GM13976 (cell line): ENCODE measurements at regions of chr10 and their contacts with region 1.

Region 1: DNA sequence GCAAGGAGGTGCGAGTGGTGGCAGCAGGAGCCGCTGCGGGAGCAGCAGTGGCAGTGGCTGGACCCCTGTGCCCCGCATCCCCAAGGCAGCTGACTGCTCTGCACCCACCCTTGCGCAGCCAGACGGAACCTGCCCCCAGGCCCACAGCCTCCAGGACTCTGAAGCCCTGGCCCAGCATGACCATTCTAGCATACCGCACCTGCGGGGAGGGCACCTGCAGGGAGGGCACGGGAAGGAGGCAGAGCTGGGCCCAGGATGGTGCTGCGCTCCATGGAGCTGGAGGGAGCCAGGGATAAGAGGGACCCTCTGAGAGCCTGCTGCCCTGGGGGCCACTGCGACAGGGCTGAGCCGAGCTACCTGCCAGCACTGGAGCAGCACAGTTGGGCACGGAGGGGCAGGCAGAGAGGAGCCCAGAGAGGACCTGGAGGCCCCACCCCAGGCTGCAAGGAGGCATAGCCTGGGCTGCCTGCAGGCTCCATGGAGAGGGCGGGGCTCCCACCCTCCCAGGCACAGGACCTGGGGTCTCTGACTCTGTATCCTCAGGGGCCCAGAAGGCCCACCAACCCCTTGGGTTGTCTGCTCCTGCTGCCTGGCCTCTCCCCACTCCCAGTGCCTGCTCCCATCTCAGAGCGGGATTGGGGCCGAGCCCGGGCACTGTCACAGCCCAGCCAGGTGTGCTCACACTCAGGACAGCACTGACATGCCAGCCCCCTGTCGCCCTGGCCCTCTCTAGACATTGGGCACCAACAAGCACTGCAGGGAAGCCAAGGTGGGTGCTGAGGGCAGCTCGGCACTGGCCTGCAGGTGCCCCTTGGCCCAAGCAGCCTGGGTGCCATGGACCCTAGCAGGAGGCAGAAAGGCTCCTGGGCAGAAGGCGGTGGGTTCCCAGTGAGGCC is 87.6 kb downstream of the HTR7 start:
- DNase-seq: no peak
- CTCF ChIP-seq: no peak

Region 2: DNA sequence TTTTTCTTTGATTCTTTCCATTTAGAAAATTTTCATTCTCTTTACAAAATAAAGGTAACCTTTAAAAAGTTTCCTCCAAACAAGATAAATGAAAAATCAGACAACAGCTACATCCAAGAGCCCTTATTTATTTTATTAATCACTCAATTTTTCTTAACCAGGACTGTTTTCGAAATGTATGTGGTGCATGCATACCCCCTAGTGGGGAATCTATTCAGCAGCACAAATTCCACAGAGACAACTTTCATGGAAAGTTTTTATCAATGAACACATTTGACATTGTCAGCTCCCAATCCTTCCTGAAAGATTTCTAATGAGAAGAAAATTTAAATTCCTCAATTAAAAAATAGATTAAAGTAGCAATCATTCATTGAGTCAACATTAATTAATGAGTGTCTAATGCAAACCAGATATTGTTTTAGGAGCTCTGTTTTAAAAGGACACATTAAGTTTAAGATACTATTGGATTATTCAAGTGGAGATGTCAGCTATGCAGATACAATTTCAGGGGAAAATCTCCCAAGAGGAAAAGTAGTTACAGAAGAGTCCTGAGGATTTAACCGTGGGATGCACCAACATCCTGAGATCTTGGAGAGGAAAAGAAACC is 92.8 kb after region 1 on chr10:
- in situ Hi-C with region 1: loop called (anchors 10 kb)
- DNase-seq: no peak
- CTCF ChIP-seq: peak; percentile 43